ENCODE measurements at regions of chr11 and their contacts with region 1.

Region 1: DNA sequence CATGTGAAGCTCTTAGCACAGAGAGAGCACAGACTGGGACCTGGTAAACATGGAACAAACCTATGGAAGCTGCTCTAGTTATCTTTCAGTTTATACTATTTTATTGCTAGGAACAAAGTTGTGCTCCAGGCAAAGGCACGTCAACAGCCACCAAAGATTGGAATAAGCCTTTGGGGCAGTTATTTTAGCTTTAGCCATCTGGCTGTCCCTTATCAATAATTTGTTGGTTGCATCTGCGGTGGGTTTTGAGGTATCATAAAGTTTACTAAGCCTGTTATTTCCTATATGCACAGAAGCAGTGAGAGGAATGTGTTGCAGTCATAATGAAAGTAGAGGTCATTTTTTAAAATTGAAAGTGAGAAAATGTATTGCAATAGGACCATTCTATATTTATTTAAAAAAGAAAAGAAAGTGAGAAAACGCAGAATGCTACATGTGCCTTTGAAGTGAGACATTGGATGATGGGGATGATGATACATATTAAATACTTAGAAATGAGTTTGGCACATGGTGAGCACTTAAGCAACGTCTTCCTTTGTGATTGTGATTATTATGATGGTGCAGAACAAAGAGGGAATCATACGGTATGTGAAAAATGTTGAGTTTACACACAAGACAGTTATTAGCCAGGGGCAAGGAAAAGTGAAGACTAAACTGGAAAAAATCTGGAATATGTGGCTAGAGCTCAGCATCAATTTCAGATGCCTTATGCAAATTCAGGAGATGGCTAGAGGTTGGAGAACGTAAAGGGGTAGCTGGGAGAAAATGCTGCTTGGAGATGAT is 58.3 kb downstream of the PRR5L start:
- DNase-seq: no peak
- ATAC-seq: no peak
- H3K4me3 ChIP-seq: no peak overlapping the region
- H3K4me3 Mint-ChIP-seq: peak overlapping the region; percentile 29
- H3K27ac ChIP-seq: no peak overlapping the region
- H3K27ac Mint-ChIP-seq: no peak overlapping the region
- H3K4me1 ChIP-seq: peaks cover 47 to 49% of the 10 kb centered on the region in 2 donors
- H3K4me1 Mint-ChIP-seq: peaks cover 46% of the 10 kb centered on the region
- H3K27me3 ChIP-seq: peaks cover 0 to 7% (median 6%) of the 10 kb centered on the region in 4 experiments
- H3K27me3 Mint-ChIP-seq: no peaks in the 10 kb centered on the region
- CTCF ChIP-seq: no peak

Region 2: GRCh38 chr11:36376888-36377758 is 22.7 kb after region 1 on chr11:
- CTCF ChIA-PET with region 1: interaction called, 13 read pairs
- POLR2A ChIA-PET with region 1: no interaction called
- intact Hi-C with region 1: no loop called
- DNase-seq: peak; percentile 63
- ATAC-seq: peak; percentile 58
- H3K4me3 ChIP-seq: peak overlapping the region; percentile 53 to 81 (median 70)
- H3K4me3 Mint-ChIP-seq: peak overlapping the region; percentile 92
- H3K27ac ChIP-seq: no peak overlapping the region
- H3K27ac Mint-ChIP-seq: no peak overlapping the region
- H3K4me1 ChIP-seq: peaks cover 26 to 35% of the 10 kb centered on the region in 2 donors
- H3K4me1 Mint-ChIP-seq: peaks cover 33% of the 10 kb centered on the region
- H3K27me3 ChIP-seq: peaks cover 0 to 34% (median 18%) of the 10 kb centered on the region in 4 experiments
- H3K27me3 Mint-ChIP-seq: peaks cover 53% of the 10 kb centered on the region
- CTCF ChIP-seq: peak; percentile 71

Region 3: GRCh38 chr11:36390963-36391471 is 36.6 kb after region 1 on chr11:
- CTCF ChIA-PET with region 1: no interaction called
- POLR2A ChIA-PET with region 1: no interaction called
- intact Hi-C with region 1: loop called (anchors 5 kb)
- DNase-seq: peak; percentile 64
- ATAC-seq: peak; percentile 90
- H3K4me3 ChIP-seq: no peak overlapping the region
- H3K4me3 Mint-ChIP-seq: peak overlapping the region; percentile 58
- H3K27ac ChIP-seq: no peak overlapping the region
- H3K27ac Mint-ChIP-seq: peak overlapping the region; percentile 62
- H3K4me1 ChIP-seq: peaks cover 24 to 33% of the 10 kb centered on the region in 2 donors
- H3K4me1 Mint-ChIP-seq: peaks cover 39% of the 10 kb centered on the region
- H3K27me3 ChIP-seq: no peaks in the 10 kb centered on the region
- H3K27me3 Mint-ChIP-seq: no peaks in the 10 kb centered on the region
- CTCF ChIP-seq: no peak

Region 4: DNA sequence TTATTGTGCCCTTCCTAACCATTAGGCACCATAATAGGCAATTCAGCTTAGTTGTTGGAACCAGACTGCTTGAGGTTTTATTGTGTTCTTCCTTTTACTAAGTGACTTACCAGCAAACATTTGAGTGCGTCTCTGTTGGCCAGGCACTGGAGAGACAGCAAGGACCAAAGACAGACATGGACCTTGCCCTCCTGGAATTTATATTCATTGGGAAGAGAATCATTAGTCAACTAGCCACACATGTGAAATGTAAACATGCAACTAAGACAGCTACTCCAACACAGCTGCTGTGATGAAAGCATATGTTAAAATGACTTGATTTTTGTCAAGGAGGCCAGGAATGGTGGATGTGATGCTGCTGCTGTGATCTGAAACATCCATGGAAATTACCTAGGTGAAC is 49.2 kb after region 1 on chr11:
- CTCF ChIA-PET with region 1: no interaction called
- POLR2A ChIA-PET with region 1: no interaction called
- intact Hi-C with region 1: no loop called
- DNase-seq: no peak
- ATAC-seq: no peak
- H3K4me3 ChIP-seq: no peak overlapping the region
- H3K4me3 Mint-ChIP-seq: no peak overlapping the region
- H3K27ac ChIP-seq: no peak overlapping the region
- H3K27ac Mint-ChIP-seq: no peak overlapping the region
- H3K4me1 ChIP-seq: peaks cover 51 to 54% of the 10 kb centered on the region in 2 donors
- H3K4me1 Mint-ChIP-seq: peaks cover 56% of the 10 kb centered on the region
- H3K27me3 ChIP-seq: no peaks in the 10 kb centered on the region
- H3K27me3 Mint-ChIP-seq: no peaks in the 10 kb centered on the region
- CTCF ChIP-seq: no peak

Measured in B cell (primary cell).